Activated T-helper 2 cell treated with anti-CD3 and anti-CD28 coated beads, Interferon-gamma antibody, Interleukin-2, Interleukin-4, amounts not matched to agents 10 μg/mL and 5 μg/mL and 100 μg/mL, durations not matched to agents 14 hours and 24 hours and 36 hours (primary cell): ENCODE measurements at regions of chr14 and their contacts with region 1.

Region 1: GRCh38 chr14:102316743-102317563 is 2.6 kb upstream of the ZNF839 start:
- DNase-seq: peak; percentile 91
- H3K4me3 Mint-ChIP-seq: peak overlapping the region; percentile 83
- H3K27ac Mint-ChIP-seq: peak overlapping the region; percentile 89
- H3K4me1 Mint-ChIP-seq: peaks cover 53% of the 10 kb centered on the region
- H3K27me3 Mint-ChIP-seq: no peaks in the 10 kb centered on the region

Region 2: DNA sequence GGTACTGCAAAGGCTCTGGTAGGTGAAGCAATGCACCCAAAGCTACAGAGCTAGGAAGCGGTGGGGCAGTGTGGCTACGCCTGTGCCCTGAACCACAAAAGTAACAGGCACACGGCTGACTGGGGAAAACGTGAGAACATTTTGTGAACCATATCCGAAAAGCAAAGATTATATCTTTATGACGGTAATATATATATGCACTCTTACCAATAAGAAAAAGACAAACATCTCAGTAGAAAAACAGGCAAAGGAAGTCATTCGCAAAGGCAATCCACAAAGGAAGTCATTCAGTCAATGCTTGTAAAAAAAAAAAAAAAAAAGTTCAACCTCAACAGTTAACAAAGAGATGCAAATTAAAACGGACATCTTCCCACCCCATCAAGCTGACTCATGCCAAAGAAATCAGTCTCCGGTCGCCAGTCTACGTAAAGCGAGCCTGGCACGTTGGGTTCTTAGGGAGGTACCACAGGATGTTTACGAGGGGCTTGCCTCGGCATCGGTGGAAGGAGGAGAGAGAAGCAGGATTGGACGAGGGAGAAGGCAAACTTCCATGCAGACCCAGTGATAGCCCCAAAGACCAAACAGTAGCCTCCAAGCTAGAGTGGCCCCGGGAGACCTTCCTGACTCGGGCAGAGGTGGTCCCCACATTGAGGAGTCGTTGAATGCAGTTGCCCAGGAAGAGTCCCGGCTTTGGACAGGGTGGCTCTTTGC is 594.8 kb before region 1 on chr14:
- intact Hi-C with region 1: loop called (anchors 5 kb)
- DNase-seq: peak; percentile 79
- H3K4me3 Mint-ChIP-seq: peak overlapping the region; percentile 76
- H3K27ac Mint-ChIP-seq: peak overlapping the region; percentile 98
- H3K4me1 Mint-ChIP-seq: peaks cover 42% of the 10 kb centered on the region
- H3K27me3 Mint-ChIP-seq: no peaks in the 10 kb centered on the region

Region 3: GRCh38 chr14:101947906-101948665 is 368.9 kb before region 1 on chr14:
- intact Hi-C with region 1: loop called (anchors 5 kb)
- DNase-seq: peak; percentile 100
- H3K4me3 Mint-ChIP-seq: peak overlapping the region; percentile 95
- H3K27ac Mint-ChIP-seq: peak overlapping the region; percentile 97
- H3K4me1 Mint-ChIP-seq: peaks cover 11% of the 10 kb centered on the region
- H3K27me3 Mint-ChIP-seq: peaks cover 15% of the 10 kb centered on the region

Region 4: GRCh38 chr14:102086972-102087761 is 229.8 kb before region 1 on chr14 and contains the start of gene HSP90AA1:
- intact Hi-C with region 1: loop called (anchors 2 kb)
- DNase-seq: peak; percentile 94
- H3K4me3 Mint-ChIP-seq: peak within 1 kb of the TSS; percentile 90
- H3K27ac Mint-ChIP-seq: peak within 1 kb of the TSS; percentile 93
- H3K4me1 Mint-ChIP-seq: peaks cover 49% of the 10 kb centered on the region
- H3K27me3 Mint-ChIP-seq: no peaks in the 10 kb centered on the region
- total RNA-seq, gene HSP90AA1: 995 and 1,017 TPM in 2 replicates

Region 5: GRCh38 chr14:102235275-102235897 is 81.6 kb before region 1 on chr14:
- intact Hi-C with region 1: loop called (anchors 1 kb)
- DNase-seq: peak; percentile 63
- H3K4me3 Mint-ChIP-seq: no peak overlapping the region
- H3K27ac Mint-ChIP-seq: no peak overlapping the region
- H3K4me1 Mint-ChIP-seq: no peaks in the 10 kb centered on the region
- H3K27me3 Mint-ChIP-seq: peaks cover under 1% of the 10 kb centered on the region

Region 6: DNA sequence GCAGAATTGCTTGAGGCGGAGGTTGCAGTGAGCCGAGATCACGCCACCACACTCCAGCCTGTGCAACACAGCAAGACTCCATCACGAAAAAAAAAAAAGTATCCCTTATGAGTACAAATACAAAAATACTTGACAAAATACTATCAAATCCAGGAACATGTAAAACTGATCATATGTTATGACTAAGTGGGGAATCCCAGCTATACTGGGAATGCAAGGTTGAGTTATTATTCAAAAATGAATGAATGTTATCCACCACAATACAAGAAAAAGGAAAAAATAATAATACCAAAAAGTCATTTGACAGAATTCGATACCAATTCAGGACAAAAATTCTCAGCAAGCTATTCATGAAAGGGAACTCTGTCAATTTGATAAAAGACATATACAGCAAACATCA is 44.6 kb before region 1 on chr14:
- intact Hi-C with region 1: no loop called
- DNase-seq: no peak
- H3K4me3 Mint-ChIP-seq: no peak overlapping the region
- H3K27ac Mint-ChIP-seq: no peak overlapping the region
- H3K4me1 Mint-ChIP-seq: no peaks in the 10 kb centered on the region
- H3K27me3 Mint-ChIP-seq: peaks cover 3% of the 10 kb centered on the region

Region 7: GRCh38 chr14:102362545-102363181 is 45.7 kb after region 1 on chr14 and contains the starts of genes CINP and TECPR2:
- intact Hi-C with region 1: loop called (anchors 1 kb)
- DNase-seq: peak; percentile 91
- H3K4me3 Mint-ChIP-seq: peak within 1 kb of the TSS; percentile 90
- H3K27ac Mint-ChIP-seq: peak within 1 kb of the TSS; percentile 93
- H3K4me1 Mint-ChIP-seq: peaks cover 22% of the 10 kb centered on the region
- H3K27me3 Mint-ChIP-seq: no peaks in the 10 kb centered on the region
- total RNA-seq, gene CINP: 39.6 and 42.9 TPM in 2 replicates
- total RNA-seq, gene TECPR2: 7.8 and 12.8 TPM in 2 replicates

Region 8: DNA sequence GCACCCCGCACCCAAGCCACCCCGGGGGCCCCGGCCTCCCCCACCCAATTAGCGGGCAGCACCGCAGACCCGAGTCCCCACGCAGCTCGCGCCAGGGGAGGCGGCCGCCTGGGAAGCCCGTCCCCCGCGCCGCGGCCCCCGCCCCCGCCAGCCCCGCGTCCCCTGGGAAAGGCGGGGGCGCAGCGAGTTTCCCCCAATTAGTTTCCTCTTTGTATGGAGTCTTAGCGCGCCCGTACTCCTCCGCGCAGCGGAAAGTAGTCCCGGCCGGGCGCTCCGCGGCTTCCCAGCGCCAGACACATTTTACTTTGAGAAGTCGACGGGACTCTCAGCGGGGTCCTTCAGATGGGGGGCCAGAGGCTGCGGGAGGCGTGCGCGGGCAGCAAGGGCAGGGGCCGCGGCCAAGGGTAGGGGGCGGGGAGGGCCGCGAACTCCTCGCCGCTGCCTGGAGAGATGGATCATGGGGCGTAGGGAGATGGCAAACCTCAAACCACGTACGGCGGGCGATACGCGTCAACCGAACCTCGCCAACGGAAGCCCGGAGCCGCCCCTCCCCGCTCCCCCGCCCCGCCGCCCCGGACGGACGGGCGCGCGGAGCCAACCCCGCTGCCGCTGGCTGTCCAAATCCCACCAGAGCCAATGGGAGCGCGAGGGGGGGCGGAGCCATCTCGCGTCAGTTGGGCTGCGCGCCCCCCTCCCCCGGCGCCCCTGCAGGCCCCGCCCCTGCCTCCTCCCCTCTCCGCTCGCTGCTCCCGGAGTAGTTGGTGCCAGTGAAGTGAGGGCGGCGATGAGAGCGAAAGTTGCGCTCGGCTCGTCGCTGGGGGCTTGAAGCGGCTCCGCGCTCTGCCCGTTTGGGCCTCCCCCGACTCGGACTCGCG is 275.2 kb after region 1 on chr14 and contains the start of gene RCOR1:
- intact Hi-C with region 1: loop called (anchors 5 kb)
- DNase-seq: peak; percentile 97
- H3K4me3 Mint-ChIP-seq: peak within 1 kb of the TSS; percentile 91
- H3K27ac Mint-ChIP-seq: peak within 1 kb of the TSS; percentile 95
- H3K4me1 Mint-ChIP-seq: peaks cover 21% of the 10 kb centered on the region
- H3K27me3 Mint-ChIP-seq: no peaks in the 10 kb centered on the region
- total RNA-seq, gene RCOR1: 22.2 and 24.3 TPM in 2 replicates